ENCODE measurements at regions of chr14 and their contacts with region 1.

Region 1: GRCh38 chr14:78974691-78975090 is 804.5 kb downstream of the NRXN3 start:
- DNase-seq: no peak
- ATAC-seq: no peak
- H3K4me3 Mint-ChIP-seq: no peak overlapping the region
- H3K27ac Mint-ChIP-seq: no peak overlapping the region
- H3K4me1 Mint-ChIP-seq: no peaks in the 10 kb centered on the region
- H3K27me3 Mint-ChIP-seq: peaks cover 2% of the 10 kb centered on the region
- CTCF ChIP-seq: no peak

Region 2: DNA sequence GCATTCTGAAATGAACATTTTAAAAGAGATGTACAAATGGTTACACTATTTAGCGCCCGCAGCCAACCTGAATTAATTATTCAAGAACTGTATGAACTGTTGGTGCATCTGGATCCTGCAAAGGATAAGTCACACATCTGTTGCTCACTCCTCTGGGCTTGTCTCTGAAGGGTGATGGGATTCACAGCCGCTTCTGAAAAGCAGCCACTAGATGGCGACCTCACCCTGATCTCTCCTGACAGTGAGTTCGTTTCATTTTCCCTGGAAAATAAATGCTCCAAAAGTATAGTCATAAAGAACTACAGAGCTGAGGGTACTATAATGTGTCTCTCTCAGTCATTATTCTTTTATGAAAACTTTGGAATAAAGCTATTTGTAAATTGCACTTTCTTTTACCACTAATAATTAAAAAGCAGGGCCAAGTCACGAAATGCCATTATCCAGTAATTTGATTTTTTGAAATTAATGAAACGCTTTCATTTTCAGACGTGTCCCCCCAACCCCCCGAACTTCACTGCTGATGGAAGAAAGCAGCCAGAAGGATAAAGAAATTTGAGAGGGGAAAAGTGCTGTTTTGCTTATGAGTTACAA is 14.9 kb before region 1 on chr14:
- CTCF ChIA-PET with region 1: interaction called, 11 read pairs
- POLR2A ChIA-PET with region 1: no interaction called
- intact Hi-C with region 1: no loop called
- DNase-seq: peak; percentile 64
- ATAC-seq: no peak
- H3K4me3 Mint-ChIP-seq: no peak overlapping the region
- H3K27ac Mint-ChIP-seq: no peak overlapping the region
- H3K4me1 Mint-ChIP-seq: no peaks in the 10 kb centered on the region
- H3K27me3 Mint-ChIP-seq: peaks cover 5% of the 10 kb centered on the region
- CTCF ChIP-seq: peak; percentile 89

Region 3: GRCh38 chr14:79011091-79011919 is 36.6 kb after region 1 on chr14:
- CTCF ChIA-PET with region 1: no interaction called
- POLR2A ChIA-PET with region 1: no interaction called
- intact Hi-C with region 1: no loop called
- DNase-seq: peak; percentile 1
- ATAC-seq: no peak
- H3K4me3 Mint-ChIP-seq: no peak overlapping the region
- H3K27ac Mint-ChIP-seq: no peak overlapping the region
- H3K4me1 Mint-ChIP-seq: no peaks in the 10 kb centered on the region
- H3K27me3 Mint-ChIP-seq: no peaks in the 10 kb centered on the region
- CTCF ChIP-seq: peak; percentile 43